ENCODE measurements at regions of chr7 and their contacts with region 1.

Region 1: GRCh38 chr7:77331938-77332695 is 84.0 kb downstream of the GSAP start:
- DNase-seq: peak; percentile 89
- H3K4me3 ChIP-seq: peak overlapping the region in 1 of 2 experiments; percentile 7; a peak in 1 of 4 replicates
- H3K27ac ChIP-seq: peak overlapping the region in 1 of 2 experiments; percentile 92; a peak in 2 of 4 replicates
- H3K4me1 ChIP-seq: peaks cover 21 to 38% of the 10 kb centered on the region in 2 experiments
- H3K27me3 ChIP-seq: no peaks in the 10 kb centered on the region
- CTCF ChIP-seq: peak; percentile 87
- EP300 ChIP-seq: peak in 1 of 2 experiments; percentile 82; a peak in 2 of 4 replicates
- RAD21 ChIP-seq: peak; percentile 99

Region 2: DNA sequence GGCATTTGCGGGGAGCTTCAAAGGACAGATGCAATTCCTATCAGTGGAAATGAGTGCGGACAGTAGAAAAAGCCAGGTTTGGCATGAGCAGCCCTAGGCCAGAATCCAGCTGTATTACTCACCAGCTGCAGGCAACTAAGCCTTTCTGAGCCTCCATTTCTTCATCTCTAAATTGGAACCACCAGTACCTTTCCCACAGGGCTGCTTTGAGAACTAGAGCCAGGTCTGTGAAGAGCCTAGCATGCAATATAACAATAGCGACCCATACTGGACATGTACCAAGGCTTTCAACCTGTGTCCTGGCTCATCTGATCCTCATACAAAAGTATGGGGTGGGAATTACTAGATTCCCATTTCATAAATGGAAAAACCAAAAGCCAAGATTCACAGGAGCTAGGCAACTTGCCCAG is 16.9 kb before region 1 on chr7:
- CTCF ChIA-PET with region 1: interaction called, 34 read pairs
- POLR2A ChIA-PET with region 1: no interaction called
- DNase-seq: no peak
- H3K4me3 ChIP-seq: no peak overlapping the region
- H3K27ac ChIP-seq: no peak overlapping the region
- H3K4me1 ChIP-seq: no peaks in the 10 kb centered on the region
- H3K27me3 ChIP-seq: no peaks in the 10 kb centered on the region
- CTCF ChIP-seq: no peak
- EP300 ChIP-seq: no peak
- RAD21 ChIP-seq: no peak

Region 3: DNA sequence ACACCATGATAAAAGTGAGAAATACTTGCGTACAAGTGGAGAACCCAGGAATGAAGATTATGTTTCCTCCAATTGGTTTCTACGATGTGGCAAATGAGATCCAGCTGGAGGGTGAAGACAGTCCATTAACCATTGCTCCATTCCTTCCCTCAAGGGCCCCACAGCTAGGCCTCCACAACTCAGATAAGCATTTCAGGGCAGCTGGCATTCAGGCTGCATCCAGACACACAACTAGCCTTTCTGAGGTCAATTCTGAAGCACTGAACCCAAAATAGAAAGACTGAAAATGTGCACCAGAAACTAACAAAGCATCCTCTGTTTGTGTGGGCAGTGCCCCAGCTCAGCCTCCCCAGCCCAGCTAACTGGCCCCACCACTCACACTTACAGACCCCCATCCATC is 10.8 kb before region 1 on chr7:
- CTCF ChIA-PET with region 1: interaction called, 34 read pairs
- POLR2A ChIA-PET with region 1: no interaction called
- DNase-seq: no peak
- H3K4me3 ChIP-seq: no peak overlapping the region
- H3K27ac ChIP-seq: peak overlapping the region in 1 of 2 experiments; percentile 11; a peak in 1 of 4 replicates
- H3K4me1 ChIP-seq: peaks cover 6 to 8% of the 10 kb centered on the region in 2 experiments; a peak in 1 of 4 replicates
- H3K27me3 ChIP-seq: no peaks in the 10 kb centered on the region
- CTCF ChIP-seq: no peak
- EP300 ChIP-seq: no peak
- RAD21 ChIP-seq: no peak

Region 4: DNA sequence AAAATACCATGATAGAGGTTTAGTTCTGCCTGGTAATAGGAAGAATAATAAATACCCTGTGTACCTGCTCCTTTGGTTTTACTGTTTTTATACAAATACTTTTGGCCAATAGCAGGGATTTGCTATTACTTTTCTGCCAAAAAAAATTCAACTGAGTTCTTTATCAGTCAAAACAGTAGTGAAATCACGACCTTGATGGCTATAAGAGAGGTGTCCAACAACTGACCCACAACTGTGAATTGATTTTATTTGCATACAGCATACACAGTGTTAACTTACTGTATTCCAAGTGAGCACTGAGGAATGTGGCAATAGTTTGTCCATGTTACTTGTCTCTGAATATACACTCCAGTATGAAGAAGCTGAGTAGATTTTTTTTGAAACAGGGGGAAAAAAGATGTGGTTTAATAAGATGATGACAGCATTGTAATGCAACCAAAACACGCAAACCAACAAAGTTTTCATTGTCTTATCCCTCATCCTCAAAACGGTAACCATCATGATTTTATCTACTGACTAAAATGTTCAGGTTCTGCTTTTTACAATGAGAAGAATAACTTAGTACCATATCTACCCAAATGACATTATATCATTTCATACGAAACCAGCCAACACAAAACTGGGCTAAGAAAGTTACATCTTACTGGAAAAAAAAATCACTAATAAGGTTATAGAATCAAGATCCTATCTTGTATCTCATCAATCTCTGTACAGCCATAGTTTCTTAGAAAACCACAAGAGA is 20.7 kb after region 1 on chr7:
- CTCF ChIA-PET with region 1: interaction called, 10 read pairs
- POLR2A ChIA-PET with region 1: interaction called, 4 read pairs
- DNase-seq: no peak
- H3K4me3 ChIP-seq: no peak overlapping the region
- H3K27ac ChIP-seq: no peak overlapping the region
- H3K4me1 ChIP-seq: peaks cover 15 to 22% of the 10 kb centered on the region in 2 experiments
- H3K27me3 ChIP-seq: no peaks in the 10 kb centered on the region
- CTCF ChIP-seq: no peak
- EP300 ChIP-seq: no peak
- RAD21 ChIP-seq: no peak

Region 5: GRCh38 chr7:77415823-77416622 is 83.9 kb after region 1 on chr7 and contains the start of gene GSAP:
- CTCF ChIA-PET with region 1: interaction called, 17 read pairs
- POLR2A ChIA-PET with region 1: interaction called, 5 read pairs
- DNase-seq: peak; percentile 94
- H3K4me3 ChIP-seq: peak within 1 kb of the TSS; percentile 64 to 79
- H3K27ac ChIP-seq: peak within 1 kb of the TSS in 1 of 2 experiments; percentile 77; a peak in 2 of 4 replicates
- H3K4me1 ChIP-seq: peaks cover 0 to 12% of the 10 kb centered on the region in 2 experiments; a peak in 2 of 4 replicates
- H3K27me3 ChIP-seq: no peaks in the 10 kb centered on the region
- CTCF ChIP-seq: peak; percentile 28; the same call in 1 of the 2 replicates
- EP300 ChIP-seq: no peak
- RAD21 ChIP-seq: peak; percentile 1; the same call in 1 of the 2 replicates
- polyA plus RNA-seq, gene GSAP: 5.9 and 7.5 TPM in 2 replicates

Region 6: GRCh38 chr7:77830649-77831355 is 498.7 kb after region 1 on chr7:
- CTCF ChIA-PET with region 1: no interaction called
- POLR2A ChIA-PET with region 1: no interaction called
- DNase-seq: no peak
- H3K4me3 ChIP-seq: no peak overlapping the region
- H3K27ac ChIP-seq: no peak overlapping the region
- H3K4me1 ChIP-seq: peaks cover 4 to 6% of the 10 kb centered on the region in 2 experiments; a peak in 3 of 4 replicates
- H3K27me3 ChIP-seq: no peaks in the 10 kb centered on the region
- CTCF ChIP-seq: no peak
- EP300 ChIP-seq: no peak
- RAD21 ChIP-seq: no peak

Measured in SK-N-SH (cell line).